ENCODE measurements at regions of chr14 and their contacts with region 1.

Region 1: GRCh38 chr14:74109369-74109768 is 24.6 kb downstream of the LIN52 start:
- DNase-seq: no peak
- H3K4me3 ChIP-seq: no peak overlapping the region
- H3K27ac ChIP-seq: no peak overlapping the region
- H3K4me1 ChIP-seq: no peaks in the 10 kb centered on the region
- H3K27me3 ChIP-seq: no peaks in the 10 kb centered on the region
- CTCF ChIP-seq: no peak
- POLR2A ChIP-seq: no peak

Region 2: DNA sequence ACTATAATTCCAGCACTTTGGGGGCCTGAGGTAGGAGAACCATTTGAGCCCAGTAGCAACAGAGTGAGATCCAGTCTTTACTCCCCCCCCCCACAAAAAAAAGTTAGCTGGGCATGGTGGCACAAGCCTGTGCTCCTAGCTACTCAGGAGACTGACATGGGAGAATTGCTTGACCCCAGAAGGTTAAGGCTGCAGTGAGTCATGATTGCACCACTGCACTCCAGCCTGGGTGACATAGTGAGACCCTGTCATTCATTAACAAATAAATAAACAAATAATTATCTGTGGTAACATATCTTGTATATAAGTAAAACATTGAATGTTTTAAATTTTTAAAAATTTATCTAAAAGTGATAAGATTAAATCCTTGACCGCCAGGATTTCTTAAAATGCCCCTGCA is 95.1 kb before region 1 on chr14:
- CTCF ChIA-PET with region 1: no interaction called
- POLR2A ChIA-PET with region 1: no interaction called
- dilution Hi-C with region 1: no loop called
- intact Hi-C with region 1: no loop called
- DNase-seq: no peak
- H3K4me3 ChIP-seq: no peak overlapping the region
- H3K27ac ChIP-seq: no peak overlapping the region
- H3K4me1 ChIP-seq: peaks cover 11% of the 10 kb centered on the region
- H3K27me3 ChIP-seq: no peaks in the 10 kb centered on the region
- CTCF ChIP-seq: no peak
- POLR2A ChIP-seq: no peak

Region 3: GRCh38 chr14:74161526-74162158 is 52.3 kb after region 1 on chr14:
- CTCF ChIA-PET with region 1: no interaction called
- POLR2A ChIA-PET with region 1: no interaction called
- dilution Hi-C with region 1: no loop called
- intact Hi-C with region 1: no loop called
- DNase-seq: no peak
- H3K4me3 ChIP-seq: no peak overlapping the region
- H3K27ac ChIP-seq: no peak overlapping the region
- H3K4me1 ChIP-seq: no peaks in the 10 kb centered on the region
- H3K27me3 ChIP-seq: no peaks in the 10 kb centered on the region
- CTCF ChIP-seq: no peak
- POLR2A ChIP-seq: no peak

Region 4: DNA sequence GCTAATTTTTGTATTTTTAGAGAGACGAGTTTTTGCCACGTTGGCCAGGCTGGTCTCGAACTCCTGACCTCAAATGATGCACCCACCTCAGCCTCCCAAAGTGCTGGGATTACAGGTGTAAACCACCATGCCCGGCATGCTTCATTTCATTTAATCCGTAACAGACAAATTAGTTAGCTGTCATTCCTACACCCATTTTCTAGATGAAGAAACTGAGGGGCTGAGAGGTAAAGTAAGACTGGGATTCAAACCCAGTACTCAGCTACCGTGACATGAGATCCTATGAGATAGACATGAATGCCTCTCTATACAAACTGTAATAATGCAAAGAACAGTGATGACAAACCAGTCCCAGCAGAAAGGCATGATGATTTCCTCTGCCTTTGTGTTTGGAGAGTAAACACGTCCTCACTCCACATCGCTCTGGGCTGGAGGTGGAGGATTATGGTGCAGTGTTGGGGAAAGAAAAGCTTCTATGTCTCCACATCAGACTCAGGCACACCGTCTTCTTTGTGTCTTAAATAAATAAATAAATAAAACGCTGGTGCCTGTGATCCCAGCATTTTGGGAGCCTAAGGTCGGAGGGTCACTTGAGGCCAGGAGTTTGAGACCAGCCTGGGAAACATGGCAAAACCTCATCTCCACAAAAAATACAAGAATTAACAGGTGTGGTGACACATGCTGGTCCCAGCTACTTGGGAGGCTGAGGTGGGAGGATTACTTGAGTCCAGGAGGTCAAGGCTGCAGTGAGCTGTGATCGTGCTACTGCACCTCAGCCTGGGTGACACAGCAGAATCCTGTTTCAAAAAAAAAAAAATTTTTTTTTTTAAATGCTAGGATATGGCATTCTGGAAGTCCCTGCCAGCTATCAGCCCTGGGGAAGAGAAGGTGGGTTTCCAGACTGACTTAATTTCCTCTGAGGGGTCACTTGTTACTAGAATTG is 140.3 kb after region 1 on chr14:
- CTCF ChIA-PET with region 1: interaction called, 25 read pairs
- POLR2A ChIA-PET with region 1: no interaction called
- dilution Hi-C with region 1: no loop called
- intact Hi-C with region 1: loop called (anchors 1 kb)
- DNase-seq: no peak
- H3K4me3 ChIP-seq: no peak overlapping the region
- H3K27ac ChIP-seq: no peak overlapping the region
- H3K4me1 ChIP-seq: no peaks in the 10 kb centered on the region
- H3K27me3 ChIP-seq: peaks cover 5 to 22% of the 10 kb centered on the region in 2 experiments
- CTCF ChIP-seq: no peak
- POLR2A ChIP-seq: no peak

Region 5: DNA sequence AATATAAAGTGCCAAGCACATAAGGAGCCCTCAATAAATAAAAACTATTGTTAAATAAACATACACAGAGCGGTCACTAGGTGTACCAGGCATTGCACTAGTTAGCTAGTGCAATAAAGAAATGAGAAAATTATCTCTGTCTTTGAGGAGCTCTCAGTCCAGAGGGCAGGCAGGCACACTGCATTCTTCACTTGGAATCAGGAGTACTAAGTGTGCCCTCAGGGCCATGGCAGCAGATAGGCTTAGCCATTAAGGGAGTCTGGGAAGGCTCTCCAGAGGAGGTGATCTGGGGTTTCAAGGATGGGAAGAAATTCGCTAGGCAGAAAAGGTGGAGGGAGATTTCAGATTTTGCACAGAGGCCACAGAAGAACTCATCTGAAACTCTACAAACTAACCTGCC is 184.2 kb after region 1 on chr14:
- CTCF ChIA-PET with region 1: interaction called, 3 read pairs
- POLR2A ChIA-PET with region 1: no interaction called
- dilution Hi-C with region 1: no loop called
- intact Hi-C with region 1: loop called (anchors 1 kb)
- DNase-seq: no peak
- H3K4me3 ChIP-seq: no peak overlapping the region
- H3K27ac ChIP-seq: no peak overlapping the region
- H3K4me1 ChIP-seq: peaks cover 2% of the 10 kb centered on the region
- H3K27me3 ChIP-seq: no peaks in the 10 kb centered on the region
- CTCF ChIP-seq: no peak
- POLR2A ChIP-seq: no peak